ENCODE measurements at regions of chr1 and their contacts with region 1.

Region 1: GRCh38 chr1:155466996-155467395 is 95.6 kb downstream of the ASH1L start:
- DNase-seq: no peak
- H3K4me3 Mint-ChIP-seq: peak overlapping the region; percentile 11
- H3K27ac Mint-ChIP-seq: peak overlapping the region; percentile 71
- H3K4me1 Mint-ChIP-seq: peaks cover 43% of the 10 kb centered on the region
- H3K27me3 Mint-ChIP-seq: no peaks in the 10 kb centered on the region

Region 2: DNA sequence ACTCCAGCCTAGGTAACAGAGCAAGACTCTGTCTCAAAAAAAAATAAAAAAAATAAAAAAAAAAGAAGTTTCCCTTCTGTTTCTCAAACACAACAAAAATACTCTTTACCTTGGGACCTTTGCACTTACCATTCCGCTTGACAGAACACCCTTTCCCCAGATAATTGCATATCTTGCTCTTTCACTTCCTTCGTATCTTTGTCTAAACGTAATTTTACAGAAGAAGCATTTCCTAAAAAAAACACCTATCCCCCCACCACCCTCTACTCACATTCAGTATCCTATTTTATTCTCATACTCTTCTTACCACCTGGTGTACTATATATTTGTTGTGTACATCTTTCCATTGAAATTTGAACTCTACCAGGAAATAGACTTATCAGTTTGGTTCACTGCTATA is 62.9 kb after region 1 on chr1:
- intact Hi-C with region 1: loop called (anchors 10 kb)
- DNase-seq: no peak
- H3K4me3 Mint-ChIP-seq: no peak overlapping the region
- H3K27ac Mint-ChIP-seq: no peak overlapping the region
- H3K4me1 Mint-ChIP-seq: peaks cover 23% of the 10 kb centered on the region
- H3K27me3 Mint-ChIP-seq: no peaks in the 10 kb centered on the region